ENCODE measurements at regions of chr20 and their contacts with region 1.

Region 1: DNA sequence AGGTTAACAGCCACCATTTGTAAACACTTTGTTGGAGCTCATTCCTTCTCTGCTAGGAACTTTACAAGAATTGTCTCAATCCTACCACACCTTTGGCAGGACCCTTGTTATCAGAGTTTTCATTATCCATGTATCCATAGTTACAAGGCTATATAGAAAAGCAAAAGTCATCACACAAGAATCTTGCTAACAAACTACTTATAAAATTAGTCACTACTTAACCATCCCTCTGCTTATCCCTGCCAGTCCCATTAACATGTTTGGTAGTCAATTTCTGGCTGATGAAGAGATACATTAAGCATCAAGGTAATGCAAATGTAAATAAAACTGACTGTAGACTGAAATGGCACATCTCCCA is 10.4 kb downstream of the ZSWIM3 start:
- DNase-seq: no peak

Region 2: DNA sequence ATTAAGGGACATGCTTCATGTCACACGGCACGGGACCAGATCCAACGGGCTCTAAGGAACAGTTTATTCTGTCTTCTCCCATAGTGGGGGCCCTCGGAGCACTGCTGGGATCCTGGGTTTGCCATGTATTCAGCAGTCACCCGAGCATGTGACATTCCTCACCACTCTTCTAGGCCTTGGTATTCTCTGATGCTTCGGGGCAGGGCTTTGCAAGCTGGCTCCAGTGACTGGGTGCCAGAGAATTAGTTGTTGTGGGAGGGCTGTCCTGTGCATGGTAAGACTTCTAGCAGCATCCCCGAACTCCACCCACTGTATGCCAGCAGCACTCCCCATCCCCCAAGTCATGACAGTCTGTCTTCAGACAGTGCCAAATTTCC is 1147.2 kb before region 1 on chr20:
- intact Hi-C with region 1: loop called in 1 of 2 experiments (anchors 5 kb)
- DNase-seq: no peak

Measured in posterior vena cava (tissue), 2 donors.